PC-9 (cell line): ENCODE measurements at regions of chr12 and their contacts with region 1.

Region 1: GRCh38 chr12:12611512-12612306 is at the start of gene CREBL2:
- DNase-seq: peak; percentile 91 to 93
- H3K4me3 ChIP-seq: peak within 1 kb of the TSS; percentile 89
- H3K27ac ChIP-seq: peak within 1 kb of the TSS; percentile 83
- H3K4me1 ChIP-seq: peaks cover 30% of the 10 kb centered on the region
- H3K27me3 ChIP-seq: no peaks in the 10 kb centered on the region
- CTCF ChIP-seq: no peak
- total RNA-seq, gene CREBL2: 26.6 and 30.3 TPM in 2 replicates

Region 2: DNA sequence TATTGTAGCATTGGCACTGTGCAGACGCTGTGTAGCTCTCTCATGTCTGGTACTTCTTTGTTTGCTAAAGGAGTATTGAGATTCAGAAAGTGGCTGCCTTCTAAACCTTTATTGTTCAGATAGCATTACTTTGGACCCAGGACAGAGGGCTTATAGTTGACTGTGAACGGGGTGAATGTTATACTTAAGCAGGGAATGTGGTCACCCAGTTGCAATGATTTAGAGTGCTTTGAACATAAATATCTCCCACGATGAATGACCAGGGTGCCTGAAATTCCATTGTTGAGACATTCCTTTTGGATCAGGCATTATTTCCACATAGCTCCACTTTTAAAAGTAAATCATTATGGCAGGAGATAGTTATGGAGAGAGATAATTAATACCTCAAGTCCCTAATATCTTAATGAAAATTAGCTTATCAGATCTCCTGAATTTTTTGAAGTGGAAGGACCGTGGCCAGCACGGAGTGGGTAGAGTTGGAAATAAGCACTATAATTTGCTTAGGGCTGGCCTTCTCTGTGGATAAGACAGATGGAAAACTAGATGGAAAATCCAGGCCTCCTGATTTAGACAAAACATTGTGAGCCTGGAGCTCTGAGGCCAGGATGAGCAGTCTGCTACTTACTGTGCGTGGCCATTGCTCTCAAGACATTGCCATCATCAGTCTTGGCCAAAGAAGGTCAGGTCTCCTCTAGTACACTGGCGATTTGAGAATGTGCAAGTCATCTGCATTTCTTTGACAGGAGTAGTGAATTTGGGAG is 847.8 kb before region 1 on chr12:
- CTCF ChIA-PET with region 1: no interaction called
- POLR2A ChIA-PET with region 1: interaction called, 12 read pairs
- intact Hi-C with region 1: no loop called
- DNase-seq: no peak
- H3K4me3 ChIP-seq: no peak overlapping the region
- H3K27ac ChIP-seq: no peak overlapping the region
- H3K4me1 ChIP-seq: no peaks in the 10 kb centered on the region
- H3K27me3 ChIP-seq: no peaks in the 10 kb centered on the region
- CTCF ChIP-seq: no peak

Region 3: DNA sequence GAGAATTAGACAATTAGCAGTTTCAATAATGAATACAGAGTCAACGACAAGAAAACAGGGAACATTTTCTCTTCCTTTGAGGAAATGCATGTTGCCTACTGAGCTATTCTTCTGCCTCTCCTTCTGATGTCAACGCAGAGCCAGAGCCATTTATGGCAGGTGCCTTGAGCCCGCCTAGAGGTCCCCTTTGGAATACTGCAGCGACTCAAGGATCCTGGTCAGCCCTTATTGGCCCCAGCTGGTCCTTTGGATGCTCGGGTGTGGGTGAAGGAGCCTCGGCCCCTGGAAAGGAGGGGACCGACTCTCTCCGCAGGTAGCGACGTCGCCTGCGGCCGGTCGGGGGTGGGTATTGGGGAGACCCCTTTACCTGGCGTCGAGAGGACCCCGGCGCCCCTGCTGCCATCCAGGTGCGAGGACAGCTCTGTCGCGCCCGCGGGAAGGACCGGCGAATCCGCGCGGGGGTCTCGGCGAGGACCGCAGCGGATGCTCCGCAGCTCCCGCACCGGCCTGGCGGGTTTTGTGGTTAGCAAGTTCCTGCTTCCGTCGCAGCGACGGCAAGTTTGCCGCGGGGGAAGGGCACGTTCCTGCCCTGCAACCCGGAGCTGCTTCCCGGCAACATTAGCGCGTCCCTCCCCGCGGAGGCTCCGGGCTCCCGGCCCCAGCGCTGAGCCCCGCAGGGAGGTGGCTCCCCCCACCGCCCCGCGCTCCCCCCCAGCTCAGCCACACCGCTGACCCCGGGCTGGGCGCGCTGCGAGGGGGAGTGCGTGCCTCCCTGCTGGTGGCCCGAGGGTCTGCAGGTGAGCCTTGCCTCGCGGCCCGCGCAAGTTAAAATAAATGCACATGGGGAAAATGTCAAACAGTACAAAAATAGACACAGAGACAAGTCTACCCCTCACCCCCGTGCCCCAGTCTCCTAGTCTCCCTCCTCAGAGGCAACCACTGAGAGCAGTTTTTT is 261.7 kb before region 1 on chr12 and contains the start of gene MANSC1:
- CTCF ChIA-PET with region 1: interaction called, 15 read pairs
- POLR2A ChIA-PET with region 1: interaction called, 10 read pairs
- intact Hi-C with region 1: no loop called
- DNase-seq: peak; percentile 60 to 71
- H3K4me3 ChIP-seq: peak within 1 kb of the TSS; percentile 85
- H3K27ac ChIP-seq: peak within 1 kb of the TSS; percentile 92
- H3K4me1 ChIP-seq: peaks cover 37% of the 10 kb centered on the region
- H3K27me3 ChIP-seq: no peaks in the 10 kb centered on the region
- CTCF ChIP-seq: peak; percentile 45; the same call in 1 of the 2 replicates
- total RNA-seq, gene MANSC1: 25.5 and 32.0 TPM in 2 replicates

Region 4: GRCh38 chr12:12582895-12583303 is 28.8 kb before region 1 on chr12:
- CTCF ChIA-PET with region 1: no interaction called
- POLR2A ChIA-PET with region 1: interaction called, 7 read pairs
- intact Hi-C with region 1: loop called (anchors 1 kb)
- DNase-seq: peak; percentile 60 to 99
- H3K4me3 ChIP-seq: peak overlapping the region; percentile 12; the same call in 1 of the 2 replicates
- H3K27ac ChIP-seq: peak overlapping the region; percentile 91
- H3K4me1 ChIP-seq: peaks cover 64% of the 10 kb centered on the region
- H3K27me3 ChIP-seq: no peaks in the 10 kb centered on the region
- CTCF ChIP-seq: no peak

Region 5: GRCh38 chr12:13472690-13473089 is 861.0 kb after region 1 on chr12:
- CTCF ChIA-PET with region 1: no interaction called
- POLR2A ChIA-PET with region 1: no interaction called
- intact Hi-C with region 1: no loop called
- DNase-seq: no peak
- H3K4me3 ChIP-seq: no peak overlapping the region
- H3K27ac ChIP-seq: no peak overlapping the region
- H3K4me1 ChIP-seq: no peaks in the 10 kb centered on the region
- H3K27me3 ChIP-seq: no peaks in the 10 kb centered on the region
- CTCF ChIP-seq: no peak